Right cardiac atrium (tissue), 5 donors: ENCODE measurements at regions of chr9 and their contacts with region 1.

Region 1: GRCh38 chr9:90914868-90915483 is 113.4 kb downstream of the SYK start:
- DNase-seq: peak; percentile 63 to 87 (median 80)
- ATAC-seq: peak; percentile 81 to 90
- H3K4me3 ChIP-seq: no peak overlapping the region
- H3K27ac ChIP-seq: no peak overlapping the region
- H3K4me1 ChIP-seq: peaks cover 4% of the 10 kb centered on the region
- H3K27me3 ChIP-seq: no peaks in the 10 kb centered on the region

Region 2: GRCh38 chr9:90538566-90538965 is 376.4 kb before region 1 on chr9:
- intact Hi-C with region 1: no loop called
- DNase-seq: no peak
- ATAC-seq: no peak
- H3K4me3 ChIP-seq: no peak overlapping the region
- H3K27ac ChIP-seq: no peak overlapping the region
- H3K4me1 ChIP-seq: no peaks in the 10 kb centered on the region
- H3K27me3 ChIP-seq: no peaks in the 10 kb centered on the region

Region 3: GRCh38 chr9:90770182-90770738 is 144.7 kb before region 1 on chr9:
- intact Hi-C with region 1: no loop called
- DNase-seq: no peak
- ATAC-seq: no peak
- H3K4me3 ChIP-seq: no peak overlapping the region
- H3K27ac ChIP-seq: no peak overlapping the region
- H3K4me1 ChIP-seq: no peaks in the 10 kb centered on the region
- H3K27me3 ChIP-seq: no peaks in the 10 kb centered on the region

Region 4: GRCh38 chr9:91681461-91682305 is 766.7 kb after region 1 on chr9:
- intact Hi-C with region 1: loop called in 1 of 4 experiments (anchors 2 kb)
- DNase-seq: peak; percentile 83 to 90 (median 89)
- ATAC-seq: peak; percentile 94 to 97
- H3K4me3 ChIP-seq: no peak overlapping the region
- H3K27ac ChIP-seq: no peak overlapping the region
- H3K4me1 ChIP-seq: no peaks in the 10 kb centered on the region
- H3K27me3 ChIP-seq: no peaks in the 10 kb centered on the region

Region 5: DNA sequence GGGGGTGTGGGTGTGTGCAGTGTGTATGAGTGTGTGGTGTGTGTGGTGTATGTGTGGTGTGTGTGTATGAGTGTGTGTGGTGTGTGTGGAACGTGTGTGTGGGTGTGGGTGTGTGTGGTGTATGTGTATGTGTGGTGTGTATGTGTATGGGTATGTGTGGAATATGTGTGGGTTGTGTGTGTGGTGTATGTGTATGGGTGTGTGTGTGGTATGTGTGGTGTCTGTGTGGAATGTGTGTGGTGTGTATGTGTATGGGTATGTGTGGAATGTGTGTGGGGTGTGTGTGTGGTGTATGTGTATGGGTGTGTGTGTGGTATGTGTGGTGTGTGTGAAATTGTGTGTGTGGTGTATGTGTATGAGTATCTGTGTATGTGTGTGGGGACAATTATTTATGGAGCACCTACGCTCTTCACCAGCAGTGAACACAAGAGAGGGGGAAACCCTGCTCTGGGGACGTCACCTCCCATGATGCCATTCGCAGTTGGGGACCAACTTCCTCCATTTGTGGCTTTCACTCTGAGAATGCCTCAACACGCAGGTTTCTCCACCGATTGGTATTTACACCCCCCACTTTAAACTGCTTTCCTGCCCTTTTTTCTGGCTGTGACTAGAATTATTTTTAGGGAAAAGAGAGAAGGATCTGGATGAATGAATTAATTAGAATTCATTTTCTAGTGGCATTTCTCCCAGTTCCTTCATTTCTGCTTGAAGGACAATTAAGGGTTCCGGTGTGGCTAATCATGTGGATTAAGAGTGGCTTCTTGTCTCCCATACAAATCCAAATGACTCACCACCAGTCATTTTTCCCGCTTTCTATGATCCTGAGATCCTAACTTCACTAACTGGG is 797.0 kb after region 1 on chr9:
- intact Hi-C with region 1: loop called in 1 of 4 experiments (anchors 10 kb)
- DNase-seq: no peak
- ATAC-seq: no peak
- H3K4me3 ChIP-seq: no peak overlapping the region
- H3K27ac ChIP-seq: no peak overlapping the region
- H3K4me1 ChIP-seq: no peaks in the 10 kb centered on the region
- H3K27me3 ChIP-seq: no peaks in the 10 kb centered on the region

Region 6: DNA sequence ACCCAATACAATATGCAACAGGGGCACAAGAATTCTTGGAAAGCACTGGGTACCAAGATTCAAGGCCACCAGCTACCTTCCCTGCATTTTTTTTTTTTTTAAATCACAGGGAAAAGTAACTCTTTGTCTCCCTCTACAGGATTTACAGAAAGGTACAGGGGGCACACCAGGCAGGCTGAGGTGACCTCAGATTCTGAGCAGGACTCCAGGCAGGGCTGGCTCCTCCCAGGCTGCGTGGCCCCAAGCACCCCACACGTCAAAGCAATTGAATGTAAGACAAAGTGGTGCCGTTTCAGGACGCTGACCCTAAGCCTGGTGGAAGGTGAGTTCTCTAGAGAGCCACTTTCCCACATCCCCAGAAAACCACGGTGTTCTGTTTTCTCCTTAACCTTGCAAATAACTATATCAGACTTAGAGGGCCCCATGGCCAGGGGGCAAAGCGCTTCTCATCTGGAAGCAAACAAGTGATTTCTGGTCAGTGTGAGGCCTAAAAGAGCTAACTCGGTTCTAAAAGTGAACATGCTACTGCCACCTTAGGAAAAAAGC is 812.4 kb after region 1 on chr9:
- intact Hi-C with region 1: loop called in 2 of 4 experiments (anchors 10 kb)
- DNase-seq: no peak
- ATAC-seq: peak; percentile 44 to 57
- H3K4me3 ChIP-seq: no peak overlapping the region
- H3K27ac ChIP-seq: peak overlapping the region; percentile 84
- H3K4me1 ChIP-seq: no peaks in the 10 kb centered on the region
- H3K27me3 ChIP-seq: no peaks in the 10 kb centered on the region